ENCODE measurements at regions of chrX and their contacts with region 1.

Region 1: GRCh38 chrX:2595258-2595657 is 94.5 kb upstream of the DHRSX start:
- DNase-seq: peak; percentile 11
- ATAC-seq: no peak
- H3K4me3 ChIP-seq: no peak overlapping the region
- H3K27ac ChIP-seq: no peak overlapping the region
- H3K4me1 ChIP-seq: peaks cover 1% of the 10 kb centered on the region; the same call in 1 of the 2 replicates
- H3K27me3 ChIP-seq: no peaks in the 10 kb centered on the region
- CTCF ChIP-seq: no peak
- POLR2A ChIP-seq: no peak
- RAD21 ChIP-seq: no peak

Region 2: GRCh38 chrX:1657367-1658070 is 937.7 kb before region 1 on chrX:
- CTCF ChIA-PET with region 1: no interaction called
- POLR2A ChIA-PET with region 1: no interaction called
- dilution Hi-C with region 1: no loop called
- in situ Hi-C with region 1: loop called (anchors 5 kb)
- intact Hi-C with region 1: loop called (anchors 2 kb)
- DNase-seq: no peak
- ATAC-seq: peak; percentile 53
- H3K4me3 ChIP-seq: no peak overlapping the region
- H3K27ac ChIP-seq: no peak overlapping the region
- H3K4me1 ChIP-seq: no peaks in the 10 kb centered on the region
- H3K27me3 ChIP-seq: no peaks in the 10 kb centered on the region
- CTCF ChIP-seq: no peak
- POLR2A ChIP-seq: no peak
- RAD21 ChIP-seq: no peak

Region 3: DNA sequence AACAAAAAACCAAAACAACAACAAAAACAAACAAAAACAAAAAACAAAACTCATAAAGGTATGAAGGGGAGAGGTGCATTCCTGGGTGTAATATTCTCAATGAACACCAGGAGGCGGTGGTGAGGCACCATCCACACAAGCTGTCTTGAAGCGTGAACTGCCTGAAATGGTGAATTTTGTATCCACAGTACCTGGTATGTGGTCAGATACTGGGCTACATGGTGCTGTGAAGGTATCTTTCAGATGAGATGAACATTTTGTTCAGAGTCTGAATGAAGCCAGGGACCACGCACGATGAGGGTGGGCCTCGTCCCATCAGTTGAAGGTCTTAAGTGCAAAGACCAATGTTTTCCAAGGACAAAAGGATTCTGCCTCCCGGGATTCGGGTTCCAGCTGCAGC is 921.9 kb before region 1 on chrX:
- CTCF ChIA-PET with region 1: no interaction called
- POLR2A ChIA-PET with region 1: no interaction called
- dilution Hi-C with region 1: no loop called
- in situ Hi-C with region 1: no loop called
- intact Hi-C with region 1: loop called (anchors 1 kb)
- DNase-seq: no peak
- ATAC-seq: no peak
- H3K4me3 ChIP-seq: no peak overlapping the region
- H3K27ac ChIP-seq: no peak overlapping the region
- H3K4me1 ChIP-seq: no peaks in the 10 kb centered on the region
- H3K27me3 ChIP-seq: no peaks in the 10 kb centered on the region
- CTCF ChIP-seq: peak; percentile 25; the same call in 1 of the 2 replicates
- POLR2A ChIP-seq: no peak
- RAD21 ChIP-seq: peak; percentile 34

Region 4: DNA sequence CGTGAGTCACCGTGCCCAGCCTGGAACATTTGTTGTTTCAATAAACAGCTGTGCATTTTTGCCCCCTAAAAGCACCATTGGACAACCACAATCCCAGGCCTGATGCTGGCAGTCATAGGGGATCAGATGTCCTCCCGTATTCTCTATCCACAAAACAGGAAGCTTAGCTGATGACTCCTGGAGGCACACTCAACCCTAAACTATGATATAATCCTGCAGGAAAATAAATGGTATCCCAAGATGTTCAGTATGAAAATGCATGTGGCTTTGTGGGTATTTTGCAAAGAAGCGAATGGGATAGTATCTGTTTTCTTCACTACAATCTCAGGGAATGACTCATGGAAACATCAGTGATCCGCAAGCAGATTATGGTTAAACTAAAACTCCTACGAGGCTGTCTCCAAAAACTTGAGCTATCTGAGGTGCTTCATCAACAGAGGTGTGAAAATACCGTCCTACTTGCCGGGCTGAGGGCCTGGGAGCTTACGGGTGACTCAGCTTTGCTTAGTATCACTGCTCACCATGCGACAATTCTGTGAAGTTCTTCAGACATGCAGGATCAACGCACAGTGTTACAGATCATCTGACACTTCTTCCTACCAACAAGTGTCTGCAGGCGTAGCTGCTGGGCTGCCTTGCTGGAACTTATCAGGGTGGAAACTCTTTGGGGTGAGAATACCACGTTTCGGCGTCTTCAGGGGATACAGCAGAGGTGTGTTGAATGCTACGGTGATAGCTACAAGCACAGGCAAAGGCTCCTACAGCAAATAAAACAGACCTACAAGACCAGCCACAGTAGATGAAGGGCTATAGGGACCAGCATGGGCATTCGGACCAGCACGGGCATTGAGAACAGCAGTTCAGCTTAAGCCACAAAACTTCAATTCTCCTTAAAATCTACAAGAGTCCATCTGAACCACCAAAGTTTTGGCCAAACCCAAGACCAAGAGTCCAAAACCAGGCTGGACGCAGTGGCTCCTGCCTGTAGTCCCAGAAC is 243.0 kb before region 1 on chrX:
- CTCF ChIA-PET with region 1: no interaction called
- POLR2A ChIA-PET with region 1: no interaction called
- dilution Hi-C with region 1: no loop called
- in situ Hi-C with region 1: no loop called
- intact Hi-C with region 1: loop called (anchors 10 kb)
- DNase-seq: peak; percentile 99
- ATAC-seq: peak; percentile 93
- H3K4me3 ChIP-seq: no peak overlapping the region
- H3K27ac ChIP-seq: peak overlapping the region; percentile 87
- H3K4me1 ChIP-seq: peaks cover 14% of the 10 kb centered on the region
- H3K27me3 ChIP-seq: no peaks in the 10 kb centered on the region
- CTCF ChIP-seq: 0 out of 2 replicates have a peak, but pooled peaks have one; percentile 2
- POLR2A ChIP-seq: no peak
- RAD21 ChIP-seq: peak; percentile 20

Region 5: DNA sequence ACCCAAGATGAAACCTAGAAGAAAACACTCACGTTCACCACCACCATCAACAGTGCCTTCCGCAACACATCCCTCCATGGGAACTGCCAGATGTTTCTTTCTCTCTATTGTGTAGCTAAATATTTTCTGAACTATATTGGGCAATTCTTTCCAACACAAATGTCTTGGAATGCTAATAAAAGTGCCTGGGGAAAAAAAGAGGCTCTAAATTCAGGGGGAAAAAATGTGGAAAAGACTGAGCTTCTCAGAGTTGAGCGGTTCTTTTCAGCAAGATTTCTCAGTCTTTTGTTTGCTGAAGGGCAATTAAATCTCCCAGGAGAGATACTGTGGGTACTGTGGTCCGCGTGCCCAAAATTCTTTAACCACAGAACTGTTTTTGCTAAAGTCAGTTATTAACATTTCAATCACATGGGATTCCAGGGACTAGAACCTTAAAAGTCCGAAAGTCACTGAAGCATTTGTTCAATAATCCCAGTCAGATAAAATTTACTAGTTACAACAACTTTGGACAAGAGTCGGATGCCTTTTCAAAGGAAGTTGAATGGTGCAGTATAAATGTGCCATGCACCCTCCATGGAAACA is 42.5 kb before region 1 on chrX:
- CTCF ChIA-PET with region 1: no interaction called
- POLR2A ChIA-PET with region 1: no interaction called
- dilution Hi-C with region 1: no loop called
- in situ Hi-C with region 1: no loop called
- intact Hi-C with region 1: no loop called
- DNase-seq: no peak
- ATAC-seq: peak; percentile 51
- H3K4me3 ChIP-seq: no peak overlapping the region
- H3K27ac ChIP-seq: no peak overlapping the region
- H3K4me1 ChIP-seq: no peaks in the 10 kb centered on the region
- H3K27me3 ChIP-seq: peaks cover 3% of the 10 kb centered on the region; the same call in 1 of the 2 replicates
- CTCF ChIP-seq: no peak
- POLR2A ChIP-seq: no peak
- RAD21 ChIP-seq: no peak

Region 6: DNA sequence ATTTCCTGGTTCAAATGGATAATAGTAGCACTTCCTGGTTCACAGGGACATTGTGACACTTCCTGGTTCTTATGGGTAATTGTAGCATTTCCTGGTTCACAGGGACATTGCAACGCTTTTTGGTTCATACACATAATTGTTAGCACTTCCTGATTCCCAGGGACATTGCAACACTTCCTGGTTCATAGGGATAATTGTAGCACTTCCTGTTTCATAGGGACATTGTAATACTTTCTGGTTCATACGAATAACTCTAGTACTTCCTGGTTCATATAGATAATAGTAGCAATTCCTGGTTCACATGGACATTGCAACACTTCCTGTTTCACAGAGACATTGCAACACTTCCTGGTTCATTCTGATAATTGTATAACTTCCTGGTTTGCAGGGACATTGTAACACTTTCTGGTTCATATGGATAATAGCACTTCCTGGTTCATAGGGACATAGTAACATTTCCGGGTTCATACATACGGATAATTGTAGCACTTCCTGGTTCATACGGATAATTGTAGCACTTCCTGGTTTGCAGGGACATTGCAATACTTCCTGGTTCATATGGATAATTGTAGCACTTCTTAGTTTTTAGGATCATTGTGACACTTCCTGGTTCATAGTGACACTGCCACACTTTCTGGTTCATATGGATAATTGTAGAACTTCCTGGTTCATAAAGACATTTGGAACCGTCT is 34.2 kb after region 1 on chrX:
- CTCF ChIA-PET with region 1: no interaction called
- POLR2A ChIA-PET with region 1: no interaction called
- dilution Hi-C with region 1: no loop called
- in situ Hi-C with region 1: no loop called
- intact Hi-C with region 1: no loop called
- DNase-seq: no peak
- ATAC-seq: no peak
- H3K4me3 ChIP-seq: no peak overlapping the region
- H3K27ac ChIP-seq: no peak overlapping the region
- H3K4me1 ChIP-seq: no peaks in the 10 kb centered on the region
- H3K27me3 ChIP-seq: no peaks in the 10 kb centered on the region
- CTCF ChIP-seq: no peak
- POLR2A ChIP-seq: no peak
- RAD21 ChIP-seq: no peak

Region 7: DNA sequence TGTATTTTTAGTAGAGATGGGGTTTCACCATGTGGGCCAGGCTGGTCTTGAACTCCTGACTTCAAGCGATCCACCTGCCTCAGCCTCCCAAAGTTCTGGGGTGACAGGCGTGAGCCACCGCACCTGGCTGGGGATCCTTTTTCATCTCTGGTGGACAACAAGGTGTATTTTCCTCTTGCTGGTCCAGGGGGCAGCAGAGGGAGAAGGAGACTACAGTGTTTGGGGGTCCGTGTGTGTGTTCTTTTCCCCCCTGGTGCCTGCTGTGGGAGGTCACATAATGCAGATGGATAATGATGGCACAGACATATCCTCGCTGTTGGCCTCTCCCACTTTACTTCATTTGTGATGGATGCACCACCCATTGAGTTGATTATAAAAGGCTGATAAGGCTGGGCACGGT is 56.8 kb after region 1 on chrX:
- CTCF ChIA-PET with region 1: no interaction called
- POLR2A ChIA-PET with region 1: no interaction called
- dilution Hi-C with region 1: no loop called
- in situ Hi-C with region 1: no loop called
- intact Hi-C with region 1: no loop called
- DNase-seq: no peak
- ATAC-seq: no peak
- H3K4me3 ChIP-seq: no peak overlapping the region
- H3K27ac ChIP-seq: no peak overlapping the region
- H3K4me1 ChIP-seq: no peaks in the 10 kb centered on the region
- H3K27me3 ChIP-seq: no peaks in the 10 kb centered on the region
- CTCF ChIP-seq: 0 out of 2 replicates have a peak, but pooled peaks have one; percentile 23
- POLR2A ChIP-seq: no peak
- RAD21 ChIP-seq: no peak

Region 8: DNA sequence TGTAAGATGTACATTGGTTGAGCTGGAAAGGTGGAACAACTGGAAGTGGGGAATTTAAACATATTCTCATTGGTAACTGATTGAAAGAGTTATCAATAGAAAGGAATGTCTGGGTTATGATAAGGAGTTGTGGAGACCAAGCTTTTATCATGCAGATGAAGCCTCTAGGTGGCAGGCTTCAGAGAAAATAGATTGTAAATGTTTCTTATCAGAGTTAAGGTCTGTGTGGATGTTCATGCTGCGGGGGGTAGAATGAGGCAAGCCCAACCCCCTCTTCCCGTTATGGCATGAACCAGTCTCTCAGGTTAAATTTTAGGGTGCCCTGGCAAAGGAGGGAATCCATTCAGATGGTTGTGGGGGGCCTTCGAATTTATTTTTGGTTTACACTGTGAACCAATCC is 317.9 kb after region 1 on chrX:
- CTCF ChIA-PET with region 1: no interaction called
- POLR2A ChIA-PET with region 1: no interaction called
- dilution Hi-C with region 1: no loop called
- in situ Hi-C with region 1: no loop called
- intact Hi-C with region 1: no loop called
- DNase-seq: no peak
- ATAC-seq: no peak
- H3K4me3 ChIP-seq: no peak overlapping the region
- H3K27ac ChIP-seq: no peak overlapping the region
- H3K4me1 ChIP-seq: no peaks in the 10 kb centered on the region
- H3K27me3 ChIP-seq: no peaks in the 10 kb centered on the region
- CTCF ChIP-seq: no peak
- POLR2A ChIP-seq: no peak
- RAD21 ChIP-seq: no peak